Brain microvascular endothelial cell (primary cell): ENCODE measurements at regions of chr19 and their contacts with region 1.

Region 1: GRCh38 chr19:38229585-38230073 is 5.6 kb upstream of the DPF1 start:
- DNase-seq: peak; percentile 60
- H3K4me3 ChIP-seq: peak overlapping the region; percentile 51
- H3K27ac ChIP-seq: no peak overlapping the region
- H3K27me3 ChIP-seq: no peaks in the 10 kb centered on the region
- CTCF ChIP-seq: no peak

Region 2: DNA sequence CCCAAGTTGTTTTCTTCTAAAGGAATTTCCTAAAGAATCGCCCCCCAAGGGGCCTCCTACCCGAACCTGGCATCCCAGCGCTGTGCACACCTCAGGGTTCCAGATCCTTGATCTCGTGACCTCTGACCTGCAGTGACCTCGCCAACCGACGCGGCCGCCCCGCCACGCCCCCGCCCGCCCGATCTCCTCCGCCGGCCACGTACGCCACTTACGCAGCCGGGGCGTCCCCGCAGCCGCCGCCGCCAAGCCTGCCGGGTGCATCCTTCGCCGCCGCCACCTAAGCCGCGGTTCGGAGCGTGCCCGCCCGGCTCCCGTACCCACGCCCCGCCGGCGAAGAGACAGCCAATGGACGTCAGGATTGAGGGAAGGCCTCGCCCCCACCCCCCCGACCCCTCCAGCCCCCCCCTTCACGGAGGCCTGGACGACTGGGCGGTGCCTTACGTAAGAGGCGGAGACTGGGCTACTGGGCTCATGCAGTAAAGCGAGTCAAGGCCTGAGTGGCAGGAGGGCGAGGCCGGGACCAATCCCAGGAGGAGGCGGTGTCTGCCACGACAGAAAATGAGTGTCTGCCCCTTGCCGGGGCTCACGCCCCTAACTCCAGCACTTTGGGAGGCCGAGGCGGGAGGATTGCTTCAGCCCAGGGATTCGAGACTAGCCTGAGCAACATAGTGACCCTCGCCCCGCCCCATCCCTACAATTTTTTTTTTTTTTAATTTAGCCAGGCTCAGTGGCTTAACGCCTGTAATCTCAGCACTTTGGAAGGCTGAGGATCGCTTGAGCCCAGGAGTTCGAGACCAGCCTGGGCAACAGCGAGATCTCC is 86.2 kb after region 1 on chr19 and contains the start of gene YIF1B:
- in situ Hi-C with region 1: loop called (anchors 5 kb)
- DNase-seq: peak; percentile 97
- H3K4me3 ChIP-seq: peak within 1 kb of the TSS; percentile 79
- H3K27ac ChIP-seq: peak within 1 kb of the TSS; percentile 63
- H3K27me3 ChIP-seq: no peaks in the 10 kb centered on the region
- CTCF ChIP-seq: no peak